GM12878 (cell line): ENCODE measurements at regions of chr7 and their contacts with region 1.

Region 1: GRCh38 chr7:23181684-23182553 is at the start of gene NUP42:
- DNase-seq: peak; percentile 97
- ATAC-seq: peak; percentile 95
- H3K4me3 ChIP-seq: peak within 1 kb of the TSS; percentile 74
- H3K27ac ChIP-seq: peak within 1 kb of the TSS; percentile 90
- H3K4me1 ChIP-seq: 0 out of 2 replicates have a peak, but pooled peaks cover 3% of the 10 kb centered on the region
- H3K27me3 ChIP-seq: no peaks in the 10 kb centered on the region
- CTCF ChIP-seq: no peak
- EP300 ChIP-seq: peak; percentile 42 to 62; a peak in 3 of 4 replicates
- POLR2A ChIP-seq: peak; percentile 99
- RAD21 ChIP-seq: no peak
- polyA plus RNA-seq, gene NUP42: 58.6 to 92.1 TPM

Region 2: DNA sequence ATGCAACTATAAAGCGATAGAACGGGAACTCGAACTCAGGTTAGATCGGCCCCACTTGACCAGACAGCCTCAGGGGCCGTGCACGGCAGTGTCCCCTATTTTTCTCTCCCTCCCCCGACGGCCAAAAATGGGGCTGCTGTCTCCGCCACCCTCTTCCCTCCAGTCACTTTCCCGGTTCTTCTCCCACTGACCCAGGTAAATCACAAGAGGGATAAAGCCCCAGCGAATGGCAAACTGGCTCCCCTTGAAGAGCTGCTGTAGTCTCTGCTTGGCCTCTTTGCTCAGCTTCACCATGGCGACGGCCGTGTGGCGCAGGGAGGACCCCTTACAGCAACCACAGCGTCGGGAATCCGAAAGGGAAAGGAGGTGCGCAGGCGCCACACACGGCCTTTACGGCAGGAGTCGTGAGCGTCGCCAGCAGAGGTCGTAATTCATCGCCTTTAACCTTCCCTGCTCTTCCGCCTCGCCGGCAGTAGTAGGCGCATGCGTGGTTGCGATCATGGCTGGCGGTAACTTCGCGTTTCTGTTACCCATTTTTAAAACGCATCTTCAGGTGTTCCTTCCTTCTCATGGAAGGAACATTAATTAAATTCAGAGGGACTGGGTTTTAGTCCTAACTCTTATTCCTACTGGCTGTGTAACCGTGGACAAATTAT is 359.3 kb before region 1 on chr7 and contains the start of gene TOMM7:
- CTCF ChIA-PET with region 1: no interaction called
- POLR2A ChIA-PET with region 1: interaction called, 5 read pairs
- RAD21 ChIA-PET with region 1: no interaction called
- SMC1A ChIA-PET with region 1: no interaction called
- in situ Hi-C with region 1: no loop called
- intact Hi-C with region 1: loop called (anchors 10 kb)
- DNase-seq: peak; percentile 94
- ATAC-seq: peak; percentile 92
- H3K4me3 ChIP-seq: peak within 1 kb of the TSS; percentile 84
- H3K27ac ChIP-seq: peak within 1 kb of the TSS; percentile 77
- H3K4me1 ChIP-seq: peaks cover 4% of the 10 kb centered on the region
- H3K27me3 ChIP-seq: no peaks in the 10 kb centered on the region
- CTCF ChIP-seq: peak; percentile 35 to 61 (median 36); a peak in 4 of 6 replicates
- EP300 ChIP-seq: no peak
- POLR2A ChIP-seq: peak; percentile 89
- RAD21 ChIP-seq: peak; percentile 14; the same call in 1 of the 2 replicates
- polyA plus RNA-seq, gene TOMM7: 368 to 461 TPM

Region 3: GRCh38 chr7:23093546-23093945 is 88.4 kb before region 1 on chr7:
- CTCF ChIA-PET with region 1: no interaction called
- POLR2A ChIA-PET with region 1: no interaction called
- RAD21 ChIA-PET with region 1: no interaction called
- SMC1A ChIA-PET with region 1: interaction called, 3 read pairs
- in situ Hi-C with region 1: no loop called
- intact Hi-C with region 1: loop called (anchors 5 kb)
- DNase-seq: no peak
- ATAC-seq: no peak
- H3K4me3 ChIP-seq: no peak overlapping the region
- H3K27ac ChIP-seq: no peak overlapping the region
- H3K4me1 ChIP-seq: no peaks in the 10 kb centered on the region
- H3K27me3 ChIP-seq: no peaks in the 10 kb centered on the region
- CTCF ChIP-seq: no peak
- EP300 ChIP-seq: no peak
- POLR2A ChIP-seq: no peak
- RAD21 ChIP-seq: no peak

Region 4: DNA sequence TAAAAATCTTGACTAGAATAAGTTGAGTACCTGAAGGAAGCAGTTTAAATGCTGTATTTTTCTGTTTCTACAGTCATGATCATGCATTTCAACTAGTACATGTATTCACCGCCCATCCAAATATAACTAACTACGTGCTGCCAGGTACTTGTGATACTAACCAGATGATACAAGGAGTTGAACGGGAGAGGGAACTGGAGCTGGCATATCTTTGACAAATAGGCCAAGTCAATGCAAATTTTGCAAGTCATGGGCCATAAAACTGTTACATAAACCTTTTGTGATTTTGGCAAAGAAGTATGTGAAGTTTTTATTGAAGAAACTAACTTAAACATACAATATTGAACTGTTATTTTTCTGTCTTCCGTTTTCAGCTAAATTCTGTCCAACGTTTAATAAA is 14.4 kb after region 1 on chr7:
- CTCF ChIA-PET with region 1: interaction called, 10 read pairs
- POLR2A ChIA-PET with region 1: interaction called, 3 read pairs
- RAD21 ChIA-PET with region 1: interaction called, 3 read pairs
- SMC1A ChIA-PET with region 1: interaction called, 4 read pairs
- in situ Hi-C with region 1: no loop called
- intact Hi-C with region 1: no loop called
- DNase-seq: no peak
- ATAC-seq: no peak
- H3K4me3 ChIP-seq: no peak overlapping the region
- H3K27ac ChIP-seq: no peak overlapping the region
- H3K4me1 ChIP-seq: no peaks in the 10 kb centered on the region
- H3K27me3 ChIP-seq: no peaks in the 10 kb centered on the region
- CTCF ChIP-seq: no peak
- EP300 ChIP-seq: no peak
- POLR2A ChIP-seq: no peak
- RAD21 ChIP-seq: no peak

Region 5: GRCh38 chr7:23347682-23348180 is 165.8 kb after region 1 on chr7:
- CTCF ChIA-PET with region 1: interaction called, 4 read pairs
- POLR2A ChIA-PET with region 1: no interaction called
- RAD21 ChIA-PET with region 1: interaction called, 4 read pairs
- SMC1A ChIA-PET with region 1: no interaction called
- in situ Hi-C with region 1: no loop called
- intact Hi-C with region 1: loop called (anchors 10 kb)
- DNase-seq: no peak
- ATAC-seq: 0 out of 3 replicates have a peak, but pooled peaks have one; percentile 21
- H3K4me3 ChIP-seq: no peak overlapping the region
- H3K27ac ChIP-seq: no peak overlapping the region
- H3K4me1 ChIP-seq: peaks cover 19% of the 10 kb centered on the region
- H3K27me3 ChIP-seq: no peaks in the 10 kb centered on the region
- CTCF ChIP-seq: no peak
- EP300 ChIP-seq: no peak
- POLR2A ChIP-seq: no peak
- RAD21 ChIP-seq: no peak

Region 6: GRCh38 chr7:23474094-23474828 is 292.3 kb after region 1 on chr7:
- CTCF ChIA-PET with region 1: interaction called, 5 read pairs
- POLR2A ChIA-PET with region 1: no interaction called
- RAD21 ChIA-PET with region 1: no interaction called
- SMC1A ChIA-PET with region 1: no interaction called
- in situ Hi-C with region 1: no loop called
- intact Hi-C with region 1: loop called (anchors 5 kb)
- DNase-seq: peak; percentile 76
- ATAC-seq: peak; percentile 76
- H3K4me3 ChIP-seq: peak overlapping the region; percentile 89
- H3K27ac ChIP-seq: peak overlapping the region; percentile 94
- H3K4me1 ChIP-seq: no peaks in the 10 kb centered on the region
- H3K27me3 ChIP-seq: peaks cover 0 to 4% of the 10 kb centered on the region in 2 experiments; a peak in 1 of 4 replicates
- CTCF ChIP-seq: no peak
- EP300 ChIP-seq: no peak
- POLR2A ChIP-seq: peak; percentile 93
- RAD21 ChIP-seq: no peak

Region 7: GRCh38 chr7:23558303-23558702 is 376.4 kb after region 1 on chr7:
- CTCF ChIA-PET with region 1: no interaction called
- POLR2A ChIA-PET with region 1: no interaction called
- RAD21 ChIA-PET with region 1: no interaction called
- SMC1A ChIA-PET with region 1: no interaction called
- in situ Hi-C with region 1: no loop called
- intact Hi-C with region 1: no loop called
- DNase-seq: no peak
- ATAC-seq: no peak
- H3K4me3 ChIP-seq: no peak overlapping the region
- H3K27ac ChIP-seq: no peak overlapping the region
- H3K4me1 ChIP-seq: no peaks in the 10 kb centered on the region
- H3K27me3 ChIP-seq: no peaks in the 10 kb centered on the region; a peak in 1 of 4 replicates
- CTCF ChIP-seq: no peak
- EP300 ChIP-seq: no peak
- POLR2A ChIP-seq: no peak
- RAD21 ChIP-seq: no peak